Breast epithelium (tissue), 4 donors: ENCODE measurements at regions of chr4 and their contacts with region 1.

Region 1: GRCh38 chr4:62814510-62815047 is 1594.7 kb downstream of the TECRL start:
- DNase-seq: no peak
- H3K4me3 ChIP-seq: no peak overlapping the region
- H3K27ac ChIP-seq: no peak overlapping the region
- H3K4me1 ChIP-seq: no peaks in the 10 kb centered on the region
- H3K27me3 ChIP-seq: no peaks in the 10 kb centered on the region
- CTCF ChIP-seq: no peak
- POLR2A ChIP-seq: no peak

Region 2: GRCh38 chr4:62560858-62561257 is 253.7 kb before region 1 on chr4:
- intact Hi-C with region 1: no loop called
- DNase-seq: no peak
- H3K4me3 ChIP-seq: no peak overlapping the region
- H3K27ac ChIP-seq: no peak overlapping the region
- H3K4me1 ChIP-seq: no peaks in the 10 kb centered on the region
- H3K27me3 ChIP-seq: no peaks in the 10 kb centered on the region
- CTCF ChIP-seq: no peak
- POLR2A ChIP-seq: no peak

Region 3: GRCh38 chr4:63965875-63966274 is 1151.3 kb after region 1 on chr4:
- intact Hi-C with region 1: loop called (anchors 10 kb)
- DNase-seq: no peak
- H3K4me3 ChIP-seq: no peak overlapping the region
- H3K27ac ChIP-seq: no peak overlapping the region
- H3K4me1 ChIP-seq: no peaks in the 10 kb centered on the region
- H3K27me3 ChIP-seq: no peaks in the 10 kb centered on the region
- CTCF ChIP-seq: no peak
- POLR2A ChIP-seq: no peak